ENCODE measurements at regions of chrX and their contacts with region 1.

Region 1: DNA sequence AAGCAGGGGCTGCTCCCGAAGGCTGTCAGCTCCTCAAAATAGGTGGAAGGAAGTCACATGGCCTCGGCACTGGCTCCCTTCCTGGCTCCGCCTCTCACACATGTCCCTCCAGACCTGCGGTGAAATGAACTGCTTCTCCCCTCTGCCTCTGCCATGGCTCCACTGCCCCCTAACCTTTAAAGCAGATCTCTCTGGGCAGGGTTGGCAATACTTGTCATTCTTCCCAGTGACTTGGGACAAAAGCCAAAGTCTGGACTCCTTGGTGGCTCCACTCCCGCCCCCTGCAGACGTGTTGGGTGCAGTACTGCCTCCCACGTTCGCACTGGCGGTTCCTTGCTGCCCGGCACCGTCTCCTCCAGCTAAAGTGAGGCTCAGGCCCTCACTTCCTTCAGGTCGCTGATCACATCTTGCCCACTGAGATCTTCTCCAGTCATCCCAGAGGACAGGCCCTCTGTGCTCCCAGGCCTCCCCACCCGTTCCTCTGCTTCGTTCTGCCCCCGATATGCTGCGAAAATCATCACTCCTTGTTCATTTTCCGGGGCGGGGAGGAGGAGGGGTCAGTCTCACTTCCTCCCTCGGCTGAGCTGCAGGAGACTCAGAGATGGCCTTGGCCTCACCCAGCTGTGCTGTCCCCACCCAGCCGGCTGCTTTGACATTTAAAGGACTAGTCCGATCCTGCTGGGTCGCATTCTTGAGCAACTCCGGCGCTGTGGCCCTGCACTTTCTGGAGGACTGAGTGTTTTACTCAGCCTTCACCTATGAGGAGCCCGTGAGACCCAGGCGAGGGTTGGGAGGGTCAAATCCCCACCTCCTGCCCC is 97.4 kb downstream of the PHKA2 start:
- DNase-seq: peak; percentile 23
- ATAC-seq: peak; percentile 72
- H3K4me3 ChIP-seq: peak overlapping the region; percentile 39
- H3K27ac ChIP-seq: peak overlapping the region; percentile 67; the same call in 1 of the 2 replicates
- H3K4me1 ChIP-seq: peaks cover 11% of the 10 kb centered on the region; the same call in 1 of the 2 replicates
- H3K27me3 ChIP-seq: no peaks in the 10 kb centered on the region; the same call in 1 of the 2 replicates
- CTCF ChIP-seq: peak; percentile 37
- POLR2A ChIP-seq: no peak
- RAD21 ChIP-seq: peak; percentile 32

Region 2: DNA sequence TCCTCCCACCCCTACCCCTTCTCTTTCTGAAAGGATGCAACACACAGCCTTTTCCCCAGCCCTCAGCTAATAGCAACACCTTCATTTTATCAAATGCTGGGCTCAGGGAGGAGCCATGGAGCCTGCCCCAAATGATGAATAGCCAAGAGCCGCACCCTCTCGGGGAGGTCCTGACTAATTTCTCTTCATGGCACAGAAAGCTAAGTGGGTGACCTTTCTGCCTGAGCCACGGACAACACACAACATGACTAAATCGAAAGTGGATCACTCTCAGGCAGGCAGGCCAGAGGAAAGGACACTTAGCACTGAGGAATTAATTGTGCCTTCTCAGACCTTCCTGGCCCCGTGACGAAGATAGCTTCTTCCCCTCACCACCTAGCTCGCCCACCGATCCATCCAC is 860.4 kb before region 1 on chrX:
- CTCF ChIA-PET with region 1: no interaction called
- POLR2A ChIA-PET with region 1: no interaction called
- dilution Hi-C with region 1: no loop called
- in situ Hi-C with region 1: no loop called
- intact Hi-C with region 1: no loop called
- DNase-seq: no peak
- ATAC-seq: no peak
- H3K4me3 ChIP-seq: no peak overlapping the region
- H3K27ac ChIP-seq: no peak overlapping the region
- H3K4me1 ChIP-seq: no peaks in the 10 kb centered on the region
- H3K27me3 ChIP-seq: no peaks in the 10 kb centered on the region
- CTCF ChIP-seq: no peak
- POLR2A ChIP-seq: no peak
- RAD21 ChIP-seq: no peak

Region 3: GRCh38 chrX:18674788-18675735 is 211.5 kb before region 1 on chrX:
- CTCF ChIA-PET with region 1: no interaction called
- POLR2A ChIA-PET with region 1: no interaction called
- dilution Hi-C with region 1: no loop called
- in situ Hi-C with region 1: no loop called
- intact Hi-C with region 1: loop called (anchors 5 kb)
- DNase-seq: peak; percentile 54
- ATAC-seq: peak; percentile 90
- H3K4me3 ChIP-seq: peak overlapping the region; percentile 70
- H3K27ac ChIP-seq: peak overlapping the region; percentile 48
- H3K4me1 ChIP-seq: no peaks in the 10 kb centered on the region
- H3K27me3 ChIP-seq: no peaks in the 10 kb centered on the region
- CTCF ChIP-seq: no peak
- POLR2A ChIP-seq: no peak
- RAD21 ChIP-seq: no peak

Region 4: DNA sequence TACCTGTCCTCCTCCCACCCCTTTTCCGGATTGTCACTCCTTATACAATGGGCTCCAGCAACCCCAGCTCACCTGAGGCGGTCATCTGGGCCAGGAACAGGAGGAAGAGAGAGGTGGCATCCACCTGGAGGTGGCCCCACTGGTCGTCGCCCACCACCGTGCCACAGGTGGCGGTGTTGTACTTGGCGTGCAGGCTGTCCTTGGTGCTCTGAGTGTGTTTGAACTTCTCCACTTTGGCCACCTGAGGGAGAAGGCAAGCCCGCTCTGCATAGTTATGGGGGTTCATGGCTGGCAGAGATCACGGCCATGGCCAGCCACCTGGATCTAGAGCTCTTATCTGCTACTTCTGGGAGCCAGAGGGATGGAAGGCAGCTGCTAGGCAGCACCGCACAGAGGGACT is 64.5 kb after region 1 on chrX:
- CTCF ChIA-PET with region 1: no interaction called
- POLR2A ChIA-PET with region 1: no interaction called
- dilution Hi-C with region 1: no loop called
- in situ Hi-C with region 1: no loop called
- intact Hi-C with region 1: no loop called
- DNase-seq: no peak
- ATAC-seq: no peak
- H3K4me3 ChIP-seq: no peak overlapping the region
- H3K27ac ChIP-seq: no peak overlapping the region
- H3K4me1 ChIP-seq: no peaks in the 10 kb centered on the region; the same call in 1 of the 2 replicates
- H3K27me3 ChIP-seq: no peaks in the 10 kb centered on the region
- CTCF ChIP-seq: no peak
- POLR2A ChIP-seq: no peak
- RAD21 ChIP-seq: no peak

Region 5: GRCh38 chrX:20001588-20001987 is 1115.0 kb after region 1 on chrX:
- CTCF ChIA-PET with region 1: no interaction called
- POLR2A ChIA-PET with region 1: no interaction called
- dilution Hi-C with region 1: no loop called
- in situ Hi-C with region 1: no loop called
- intact Hi-C with region 1: no loop called
- DNase-seq: no peak
- ATAC-seq: no peak
- H3K4me3 ChIP-seq: no peak overlapping the region
- H3K27ac ChIP-seq: no peak overlapping the region
- H3K4me1 ChIP-seq: no peaks in the 10 kb centered on the region
- H3K27me3 ChIP-seq: peaks cover 1% of the 10 kb centered on the region
- CTCF ChIP-seq: no peak
- POLR2A ChIP-seq: no peak
- RAD21 ChIP-seq: no peak